ENCODE measurements at regions of chr14 and their contacts with region 1.

Region 1: GRCh38 chr14:49633640-49634546 is 1.2 kb downstream of the DNAAF2 start:
- DNase-seq: peak; percentile 91 to 98
- H3K4me3 ChIP-seq: peak overlapping the region; percentile 70 to 94 (median 92)
- H3K27ac ChIP-seq: peak overlapping the region; percentile 96 to 99 (median 98)
- H3K4me1 ChIP-seq: peaks cover 14 to 79% (median 50%) of the 10 kb centered on the region in 4 donors
- H3K27me3 ChIP-seq: no peaks in the 10 kb centered on the region
- CTCF ChIP-seq: peak in 5 of 7 experiments; percentile 52 to 91 (median 82)
- EP300 ChIP-seq: no peak
- POLR2A ChIP-seq: peak in 1 of 4 donors; percentile 36

Region 2: DNA sequence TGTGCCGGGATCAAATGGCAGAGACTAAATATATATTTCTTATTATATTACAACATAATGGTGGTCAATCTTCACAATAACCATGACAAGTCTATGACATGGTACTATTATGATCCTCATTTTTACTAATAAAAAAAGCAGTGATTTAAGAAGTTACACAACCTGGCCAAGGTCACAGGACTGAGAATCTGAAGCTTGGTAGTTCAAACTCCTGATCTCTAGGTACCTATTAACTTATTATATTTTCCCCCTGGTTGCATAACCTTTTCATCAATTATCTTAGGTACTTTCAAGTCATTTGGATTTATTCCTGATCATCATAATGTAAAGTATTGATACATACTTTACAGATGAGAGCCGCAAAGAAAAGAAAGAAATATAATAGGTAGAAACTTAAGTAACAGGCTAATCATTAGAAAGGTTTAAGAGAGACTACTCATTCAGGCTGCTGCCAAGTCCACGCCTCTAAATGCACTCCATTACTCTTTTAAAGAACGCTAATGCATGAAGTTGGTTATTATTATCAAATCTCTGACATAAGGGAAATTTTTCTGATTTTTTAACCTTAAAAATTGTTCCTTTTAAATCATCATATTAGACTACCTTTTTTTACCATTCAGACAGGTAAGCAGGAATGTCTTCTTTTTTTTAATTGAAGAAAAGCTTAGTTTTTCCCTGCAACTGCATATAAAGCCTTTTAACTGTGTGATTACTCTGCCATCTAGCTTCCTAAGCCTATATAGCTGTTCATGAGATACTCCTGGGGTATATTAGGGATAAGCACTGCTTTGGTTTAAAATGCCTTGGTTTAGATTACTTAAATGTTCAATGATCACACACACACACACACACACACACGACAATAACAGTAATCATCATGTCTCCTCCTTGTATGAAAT is 83.4 kb before region 1 on chr14:
- intact Hi-C with region 1: no loop called
- DNase-seq: peak in 1 of 2 donors; percentile 20
- H3K4me3 ChIP-seq: no peak overlapping the region
- H3K27ac ChIP-seq: no peak overlapping the region
- H3K4me1 ChIP-seq: no peaks in the 10 kb centered on the region
- H3K27me3 ChIP-seq: no peaks in the 10 kb centered on the region
- CTCF ChIP-seq: peak in 1 of 7 experiments; percentile 11
- EP300 ChIP-seq: no peak
- POLR2A ChIP-seq: no peak

Region 3: DNA sequence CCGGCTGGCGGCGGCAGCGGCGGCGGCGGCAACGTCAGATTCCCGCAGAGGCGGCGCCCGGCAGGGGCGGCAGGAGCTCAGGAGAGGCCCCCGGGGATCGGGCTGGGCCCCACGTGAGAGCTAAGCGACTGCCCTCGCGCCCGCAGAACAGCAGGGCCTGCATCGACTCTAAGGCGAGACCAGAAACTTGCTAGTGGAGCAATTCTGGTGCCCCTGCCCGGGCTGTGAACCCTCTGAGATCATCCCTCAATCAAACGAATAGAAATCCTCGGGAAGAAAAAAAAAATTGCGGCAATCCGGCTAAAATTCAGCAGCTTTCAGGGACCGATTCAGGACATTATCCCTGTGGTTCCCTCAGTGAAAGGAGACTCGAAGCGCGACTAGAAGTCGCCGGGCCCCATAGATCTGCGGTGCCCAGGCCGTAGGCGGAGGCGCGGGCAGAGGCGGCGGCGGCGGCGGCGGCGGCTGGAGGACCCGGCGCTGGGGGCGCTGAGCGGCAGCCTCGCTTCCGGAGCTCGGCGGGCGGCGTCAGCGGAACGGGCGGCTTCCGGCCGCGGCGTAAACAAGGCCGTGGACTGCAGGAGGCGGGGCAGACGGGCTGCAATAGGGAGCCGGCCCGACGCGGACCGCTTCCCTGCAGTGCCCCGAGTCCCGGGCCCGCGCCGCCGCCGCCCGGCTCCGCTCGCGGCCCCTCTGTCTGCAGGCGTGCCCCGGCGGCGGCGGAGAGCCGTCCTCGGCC is 133.8 kb after region 1 on chr14 and contains the start of gene KLHDC2:
- intact Hi-C with region 1: loop called (anchors 10 kb)
- DNase-seq: peak; percentile 93 to 97
- H3K4me3 ChIP-seq: peak within 1 kb of the TSS; percentile 80 to 99 (median 92)
- H3K27ac ChIP-seq: peak within 1 kb of the TSS; percentile 96 to 99 (median 97)
- H3K4me1 ChIP-seq: peaks cover 34 to 46% (median 40%) of the 10 kb centered on the region in 4 donors
- H3K27me3 ChIP-seq: no peaks in the 10 kb centered on the region
- CTCF ChIP-seq: peak in 2 of 7 experiments; percentile 4 to 34
- EP300 ChIP-seq: no peak
- POLR2A ChIP-seq: no peak
- total RNA-seq, gene KLHDC2: 55.4 to 258 (median 137) TPM

Measured in stomach (tissue), 19 donors.